Right ventricle myocardium inferior (tissue), 1 donor: ENCODE measurements at regions of chr3 and their contacts with region 1.

Region 1: GRCh38 chr3:82133070-82133606 is 371.7 kb upstream of the GBE1 start:
- DNase-seq: peak; percentile 70
- ATAC-seq: peak; percentile 65

Region 2: GRCh38 chr3:81425198-81425868 is 707.8 kb before region 1 on chr3:
- intact Hi-C with region 1: loop called (anchors 10 kb)
- DNase-seq: no peak
- ATAC-seq: no peak

Region 3: GRCh38 chr3:81666493-81667121 is 466.5 kb before region 1 on chr3:
- intact Hi-C with region 1: loop called (anchors 2 kb)
- DNase-seq: no peak
- ATAC-seq: no peak

Region 4: DNA sequence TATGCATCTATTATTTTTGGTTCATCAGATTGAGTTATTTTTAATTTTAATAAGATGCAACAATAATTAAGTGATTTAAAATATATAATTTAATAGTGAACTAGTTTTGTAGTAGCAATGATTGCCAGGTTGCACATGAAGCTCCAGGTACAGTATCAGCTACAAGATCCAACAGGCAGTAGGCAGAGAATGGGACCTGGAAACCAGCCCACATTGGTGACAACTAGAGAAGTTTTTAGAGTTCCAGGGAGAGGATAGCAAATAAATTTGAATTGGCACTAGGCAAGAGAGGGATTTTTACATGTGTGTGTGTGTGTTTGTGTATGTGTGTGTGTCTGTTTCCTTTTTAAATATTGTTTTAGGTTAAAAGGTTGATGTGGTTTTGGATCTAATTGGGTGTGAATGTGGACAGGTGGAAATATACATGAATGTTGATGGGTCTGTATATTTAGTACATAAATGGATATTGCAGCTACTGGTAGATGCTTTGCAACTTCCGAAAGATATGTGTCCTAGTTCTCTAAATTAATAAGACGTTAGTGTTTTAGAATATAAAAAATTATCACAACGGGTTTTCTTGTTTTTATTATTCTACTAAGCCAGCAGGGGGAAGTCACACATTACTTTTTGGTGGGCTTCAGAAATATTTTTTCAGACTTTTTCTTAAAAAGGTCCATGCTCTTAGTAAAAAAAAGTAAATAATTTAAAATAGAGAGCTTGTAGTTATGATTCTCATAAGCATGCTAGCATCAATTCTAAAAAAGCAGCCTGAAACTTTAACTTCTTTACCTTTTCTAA is 261.6 kb before region 1 on chr3:
- intact Hi-C with region 1: loop called (anchors 5 kb)
- DNase-seq: no peak
- ATAC-seq: no peak

Region 5: DNA sequence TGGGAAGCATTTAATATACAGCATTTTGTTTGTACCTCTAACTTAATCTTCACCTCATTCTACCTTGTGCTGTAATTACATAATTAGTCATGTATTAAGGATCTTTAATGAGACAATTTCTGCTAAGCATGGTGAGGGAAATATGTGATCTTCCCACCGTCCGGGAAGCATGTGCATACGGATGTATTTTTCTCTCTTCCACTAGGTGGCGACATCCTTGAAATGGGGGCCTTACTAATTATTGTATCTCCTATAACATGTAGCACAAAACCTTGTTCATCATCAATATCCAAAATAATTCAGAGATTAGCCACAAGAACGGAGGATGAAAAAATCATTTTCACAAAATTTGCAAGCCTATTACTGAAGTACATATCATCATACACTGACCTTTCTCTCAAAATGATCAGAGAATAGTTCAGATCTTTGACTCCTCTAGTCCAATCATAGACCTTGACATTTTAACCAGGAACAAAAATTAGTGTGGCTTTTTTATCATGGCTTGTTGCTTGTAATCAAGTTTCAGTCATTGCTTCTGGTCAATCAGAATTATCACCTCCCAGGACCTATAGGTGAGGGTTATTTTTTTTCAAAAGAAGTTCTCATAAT is 222.8 kb before region 1 on chr3:
- intact Hi-C with region 1: loop called (anchors 10 kb)
- DNase-seq: no peak
- ATAC-seq: peak; percentile 56

Region 6: GRCh38 chr3:82080261-82080660 is 52.9 kb before region 1 on chr3:
- intact Hi-C with region 1: no loop called
- DNase-seq: no peak
- ATAC-seq: no peak